Sciatic nerve (tissue), 2 donors: ENCODE measurements at regions of chr2 and their contacts with region 1.

Region 1: DNA sequence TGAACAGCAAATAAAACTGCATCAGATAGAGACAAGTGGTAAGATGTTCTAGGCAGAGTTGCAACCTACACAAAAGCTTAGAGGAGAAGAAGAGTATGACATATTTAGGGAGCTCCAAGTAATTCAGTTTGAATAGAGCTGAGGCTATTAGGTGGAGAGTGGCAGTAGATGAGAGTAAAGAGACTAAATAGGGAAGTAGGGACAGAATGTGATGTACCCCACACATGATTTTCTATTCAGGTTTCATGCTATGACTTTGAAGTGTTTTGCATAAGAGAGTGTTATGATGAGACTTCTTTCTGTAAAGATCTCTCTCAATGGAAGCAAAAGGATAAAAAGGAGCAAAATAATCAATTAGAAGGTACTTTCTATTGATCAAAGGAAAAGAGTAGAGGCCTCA is 206.8 kb upstream of the ERBB4 start:
- DNase-seq: no peak
- ATAC-seq: no peak

Region 2: GRCh38 chr2:211516537-211516936 is 1228.8 kb before region 1 on chr2:
- intact Hi-C with region 1: loop called (anchors 5 kb)
- DNase-seq: no peak
- ATAC-seq: no peak

Region 3: DNA sequence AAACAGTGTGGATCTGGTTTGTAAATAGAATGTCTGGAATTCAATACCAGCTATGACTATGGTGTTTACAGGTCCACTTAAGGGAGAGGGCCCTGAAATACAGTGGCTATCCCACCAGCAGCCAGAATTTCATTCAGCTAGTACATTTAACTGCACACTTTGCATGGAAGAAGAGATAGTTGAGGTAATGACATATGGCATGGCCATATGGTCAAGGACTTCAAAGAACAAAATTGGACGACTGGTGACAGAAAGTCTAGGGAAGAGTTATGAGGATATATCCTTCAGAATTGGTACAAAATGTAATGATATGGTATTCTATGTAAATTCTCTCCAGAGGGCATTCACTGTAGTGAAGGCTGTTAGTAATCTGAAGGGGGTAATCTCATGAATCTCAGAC is 301.1 kb after region 1 on chr2:
- intact Hi-C with region 1: no loop called
- DNase-seq: no peak
- ATAC-seq: no peak